ENCODE measurements at regions of chr9 and their contacts with region 1.

Region 1: DNA sequence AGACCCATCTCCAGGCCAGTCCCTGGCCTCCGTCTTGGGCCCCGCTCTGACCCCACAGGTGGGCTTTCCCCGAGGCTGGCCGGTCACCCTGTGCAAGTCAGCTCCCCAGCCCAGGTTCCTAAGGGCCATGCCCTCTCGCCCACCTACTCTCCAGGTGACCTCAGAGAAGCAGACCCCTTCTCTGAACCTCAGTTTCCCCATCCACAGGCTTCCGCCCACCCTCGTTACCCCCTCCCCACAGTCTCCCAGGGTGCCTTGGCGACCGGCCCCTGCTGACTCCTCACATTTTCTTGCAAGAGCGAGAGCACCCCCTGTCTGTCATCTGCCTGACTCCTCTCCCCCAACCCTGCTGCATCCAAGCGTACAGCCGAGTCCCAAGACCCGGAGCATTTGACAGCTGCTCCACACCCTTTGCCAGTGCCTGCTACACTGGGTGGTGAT is 51.2 kb upstream of the ORM1 start:
- DNase-seq: peak; percentile 74
- ATAC-seq: peak; percentile 90

Region 2: DNA sequence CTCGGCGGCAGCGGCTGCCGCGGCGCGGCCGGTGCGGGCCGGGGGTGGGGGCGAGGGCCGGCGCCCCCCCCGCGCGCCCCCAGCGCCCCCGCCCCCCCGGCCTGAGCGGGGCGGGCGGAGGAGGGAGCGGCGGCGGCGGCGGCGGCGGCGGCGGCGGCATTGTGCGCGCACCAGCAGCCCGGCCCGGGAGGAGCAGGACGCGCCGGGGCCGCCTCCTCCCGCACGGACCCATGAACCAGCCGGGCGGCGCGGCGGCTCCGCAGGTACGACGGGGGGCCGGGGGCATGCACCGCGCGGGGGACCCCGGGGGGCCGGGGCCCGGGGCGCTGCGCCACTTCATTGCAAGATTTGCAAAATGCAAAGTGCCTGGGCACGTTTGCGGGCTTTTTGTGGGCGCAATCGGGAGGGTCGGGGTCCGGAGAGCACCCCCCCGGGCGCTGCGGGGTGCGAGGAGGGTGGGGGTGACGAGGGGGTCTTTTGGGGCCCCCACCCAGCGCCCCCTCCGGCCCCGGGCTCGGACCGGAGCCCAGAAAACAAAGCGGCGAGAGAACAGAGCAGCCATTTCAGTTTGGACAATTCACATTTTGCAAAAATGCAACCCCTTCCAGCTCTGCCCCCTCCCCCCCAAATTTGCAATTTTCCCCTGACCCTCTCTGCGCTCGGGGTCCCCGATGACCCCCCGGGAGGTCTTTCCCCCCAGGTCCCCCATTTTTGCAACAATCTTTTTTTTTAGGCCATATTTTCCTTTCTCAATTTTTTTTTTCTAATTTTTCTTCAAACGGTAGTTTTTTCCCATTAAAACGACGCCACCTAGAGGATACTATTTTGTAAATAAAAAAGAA is 395.3 kb before region 1 on chr9 and contains the start of gene ZNF618:
- intact Hi-C with region 1: no loop called
- DNase-seq: peak; percentile 70
- ATAC-seq: peak; percentile 82
- total RNA-seq, gene ZNF618: 1.5 TPM

Region 3: GRCh38 chr9:114155263-114155972 is 116.2 kb before region 1 on chr9 and contains the start of gene COL27A1:
- intact Hi-C with region 1: loop called (anchors 10 kb)
- DNase-seq: peak; percentile 93
- ATAC-seq: peak; percentile 89
- total RNA-seq, gene COL27A1: 11.0 TPM

Region 4: GRCh38 chr9:114216081-114216480 is 55.6 kb before region 1 on chr9:
- intact Hi-C with region 1: no loop called
- DNase-seq: peak; percentile 82
- ATAC-seq: peak; percentile 80

Region 5: DNA sequence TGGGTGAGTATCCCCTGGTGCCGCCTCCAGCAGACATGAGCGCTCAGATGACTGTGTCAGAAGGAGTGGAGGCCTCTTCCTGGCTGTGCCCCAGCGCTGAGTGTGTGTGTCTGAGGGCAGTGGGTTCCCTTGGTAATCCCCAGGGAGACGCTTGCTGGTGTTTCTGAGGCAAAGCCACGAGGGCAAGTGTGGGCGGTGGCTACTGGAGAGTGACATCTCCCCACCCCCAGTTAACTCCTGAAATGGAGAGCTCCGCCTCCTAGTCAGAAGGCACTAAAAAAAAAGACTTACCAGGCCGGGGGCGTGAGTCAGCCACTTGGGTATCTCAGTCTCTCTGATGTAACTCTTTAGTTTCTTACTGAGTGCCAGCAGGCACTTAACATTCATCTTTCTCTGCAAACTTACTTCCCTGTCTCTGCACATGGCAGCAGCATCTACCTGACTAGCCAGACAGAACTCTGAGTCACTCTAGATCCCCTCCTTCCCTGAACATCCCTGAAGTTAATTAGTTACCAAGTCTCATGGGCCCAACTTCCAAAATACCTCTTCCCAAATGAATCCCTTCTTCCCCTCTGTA is 77.3 kb after region 1 on chr9:
- intact Hi-C with region 1: no loop called
- DNase-seq: peak; percentile 47
- ATAC-seq: peak; percentile 82

Measured in left ventricle myocardium superior (tissue), 1 donor.